PC-3 (cell line): ENCODE measurements at regions of chr15 and their contacts with region 1.

Region 1: GRCh38 chr15:51312166-51313097 is 26.0 kb downstream of the CYP19A1 start:
- DNase-seq: peak; percentile 29
- ATAC-seq: peak; percentile 93
- H3K4me3 ChIP-seq: no peak overlapping the region
- H3K27ac ChIP-seq: peak overlapping the region; percentile 45
- H3K4me1 ChIP-seq: peaks cover 13% of the 10 kb centered on the region
- H3K27me3 ChIP-seq: no peaks in the 10 kb centered on the region
- CTCF ChIP-seq: no peak

Region 2: GRCh38 chr15:51286791-51287190 is 25.6 kb before region 1 on chr15:
- CTCF ChIA-PET with region 1: no interaction called
- POLR2A ChIA-PET with region 1: no interaction called
- intact Hi-C with region 1: loop called (anchors 2 kb)
- DNase-seq: peak; percentile 40
- ATAC-seq: peak; percentile 64
- H3K4me3 ChIP-seq: no peak overlapping the region
- H3K27ac ChIP-seq: no peak overlapping the region
- H3K4me1 ChIP-seq: no peaks in the 10 kb centered on the region
- H3K27me3 ChIP-seq: no peaks in the 10 kb centered on the region
- CTCF ChIP-seq: peak; percentile 64

Region 3: DNA sequence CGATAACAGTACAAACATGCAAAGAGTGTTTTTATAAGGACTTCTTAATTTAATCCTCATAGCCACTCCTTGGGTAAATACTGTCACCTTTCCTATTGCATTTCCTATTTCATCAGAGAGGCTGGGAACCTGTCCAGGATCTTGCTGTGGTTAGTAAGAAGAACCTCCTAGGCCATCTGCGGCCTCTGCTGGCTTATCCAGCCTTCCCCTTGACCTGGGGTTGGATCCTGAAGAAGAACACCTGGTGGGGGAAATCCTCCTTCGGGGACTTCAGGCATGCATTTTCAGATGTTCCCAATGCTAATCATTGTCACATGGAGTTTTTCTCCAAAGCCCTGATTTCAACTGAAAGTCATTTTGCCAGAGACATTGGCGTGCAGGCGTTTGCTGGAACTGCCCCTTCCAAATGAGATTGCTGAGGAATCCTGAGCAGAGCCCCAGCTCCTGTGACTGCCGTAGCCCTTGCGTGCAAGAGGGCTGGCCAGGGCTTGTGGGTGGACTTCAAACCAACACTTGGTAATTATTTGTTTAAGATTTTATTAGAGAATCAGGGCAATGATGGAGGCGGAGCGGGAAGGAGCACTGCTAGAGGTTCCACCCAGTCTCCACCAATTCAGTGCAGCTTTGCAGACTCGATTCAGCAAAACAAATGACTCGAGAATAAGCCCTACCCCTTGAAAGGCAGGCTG is 54.7 kb after region 1 on chr15:
- CTCF ChIA-PET with region 1: no interaction called
- POLR2A ChIA-PET with region 1: no interaction called
- intact Hi-C with region 1: loop called (anchors 5 kb)
- DNase-seq: peak; percentile 83
- ATAC-seq: peak; percentile 65
- H3K4me3 ChIP-seq: peak overlapping the region; percentile 30; the same call in 1 of the 2 replicates
- H3K27ac ChIP-seq: peak overlapping the region; percentile 95
- H3K4me1 ChIP-seq: peaks cover 46% of the 10 kb centered on the region
- H3K27me3 ChIP-seq: no peaks in the 10 kb centered on the region
- CTCF ChIP-seq: 0 out of 2 replicates have a peak, but pooled peaks have one; percentile 27